PC-3 (cell line): ENCODE measurements at regions of chr2 and their contacts with region 1.

Region 1: GRCh38 chr2:12320991-12321641 is 395.6 kb upstream of the TRIB2 start:
- DNase-seq: peak; percentile 87
- ATAC-seq: peak; percentile 3; the same call in 1 of the 2 replicates
- H3K4me3 ChIP-seq: no peak overlapping the region
- H3K27ac ChIP-seq: peak overlapping the region; percentile 52
- H3K4me1 ChIP-seq: peaks cover 70% of the 10 kb centered on the region
- H3K27me3 ChIP-seq: no peaks in the 10 kb centered on the region
- CTCF ChIP-seq: peak; percentile 31; the same call in 1 of the 2 replicates

Region 2: GRCh38 chr2:12050396-12050795 is 270.7 kb before region 1 on chr2:
- CTCF ChIA-PET with region 1: no interaction called
- POLR2A ChIA-PET with region 1: no interaction called
- intact Hi-C with region 1: loop called (anchors 1 kb)
- DNase-seq: peak; percentile 90
- ATAC-seq: peak; percentile 83
- H3K4me3 ChIP-seq: no peak overlapping the region
- H3K27ac ChIP-seq: peak overlapping the region; percentile 78
- H3K4me1 ChIP-seq: peaks cover 42% of the 10 kb centered on the region
- H3K27me3 ChIP-seq: no peaks in the 10 kb centered on the region
- CTCF ChIP-seq: peak; percentile 76

Region 3: DNA sequence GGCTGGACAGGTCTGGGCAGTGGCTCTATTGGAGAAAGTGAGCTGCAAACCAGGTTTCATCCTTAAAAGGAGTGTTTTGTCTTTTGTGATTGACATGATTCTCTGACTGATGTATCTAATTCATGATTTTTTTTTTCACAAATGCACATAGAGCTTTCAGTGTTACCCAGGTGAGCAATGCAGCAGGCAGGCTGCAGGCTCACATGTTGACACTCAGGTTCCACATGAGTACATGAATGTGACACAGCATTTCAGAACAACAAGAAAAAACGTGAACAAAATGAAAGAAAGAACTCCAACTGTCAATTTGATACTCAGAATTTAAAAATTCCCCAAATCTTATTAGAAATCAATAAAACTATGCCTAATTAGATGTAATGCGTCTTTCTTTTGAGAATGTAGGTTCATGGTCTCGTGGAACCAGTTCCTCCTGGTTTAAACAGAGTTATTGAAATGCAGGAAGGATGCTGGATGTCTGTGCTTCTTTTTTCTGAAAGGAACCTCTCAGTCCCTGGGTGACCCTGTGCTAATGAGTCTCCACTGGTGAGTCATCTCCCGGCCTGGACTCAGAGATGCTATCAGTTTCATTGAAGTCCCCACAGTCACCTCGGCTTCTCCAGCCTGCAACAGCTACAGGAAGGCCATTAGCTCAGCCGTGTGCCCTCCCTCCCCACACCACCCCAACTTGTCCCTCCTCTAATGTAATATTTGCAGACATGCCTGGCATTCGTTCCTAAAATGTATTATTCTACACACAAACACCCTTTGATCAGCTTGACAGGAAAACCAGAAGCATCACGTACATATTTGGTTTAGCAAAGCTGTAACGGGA is 144.3 kb before region 1 on chr2:
- CTCF ChIA-PET with region 1: no interaction called
- POLR2A ChIA-PET with region 1: no interaction called
- intact Hi-C with region 1: loop called (anchors 2 kb)
- DNase-seq: peak; percentile 88
- ATAC-seq: peak; percentile 99
- H3K4me3 ChIP-seq: no peak overlapping the region
- H3K27ac ChIP-seq: peak overlapping the region; percentile 22
- H3K4me1 ChIP-seq: peaks cover 17% of the 10 kb centered on the region
- H3K27me3 ChIP-seq: no peaks in the 10 kb centered on the region
- CTCF ChIP-seq: no peak

Region 4: GRCh38 chr2:12430407-12431133 is 109.5 kb after region 1 on chr2:
- CTCF ChIA-PET with region 1: no interaction called
- POLR2A ChIA-PET with region 1: no interaction called
- intact Hi-C with region 1: loop called (anchors 5 kb)
- DNase-seq: peak; percentile 32
- ATAC-seq: peak; percentile 65
- H3K4me3 ChIP-seq: no peak overlapping the region
- H3K27ac ChIP-seq: 0 out of 2 replicates have a peak overlapping the region, but pooled peaks have one; percentile 1
- H3K4me1 ChIP-seq: peaks cover 20% of the 10 kb centered on the region
- H3K27me3 ChIP-seq: no peaks in the 10 kb centered on the region
- CTCF ChIP-seq: no peak

Region 5: GRCh38 chr2:12702305-12703121 is 381.4 kb after region 1 on chr2:
- CTCF ChIA-PET with region 1: no interaction called
- POLR2A ChIA-PET with region 1: no interaction called
- intact Hi-C with region 1: loop called (anchors 1 kb)
- DNase-seq: peak; percentile 94
- ATAC-seq: peak; percentile 79
- H3K4me3 ChIP-seq: peak overlapping the region; percentile 28; the same call in 1 of the 2 replicates
- H3K27ac ChIP-seq: peak overlapping the region; percentile 99
- H3K4me1 ChIP-seq: peaks cover 57% of the 10 kb centered on the region
- H3K27me3 ChIP-seq: no peaks in the 10 kb centered on the region
- CTCF ChIP-seq: no peak

Region 6: GRCh38 chr2:12931186-12931844 is 610.2 kb after region 1 on chr2:
- CTCF ChIA-PET with region 1: no interaction called
- POLR2A ChIA-PET with region 1: no interaction called
- intact Hi-C with region 1: loop called (anchors 10 kb)
- DNase-seq: peak; percentile 67
- ATAC-seq: peak; percentile 16; the same call in 1 of the 2 replicates
- H3K4me3 ChIP-seq: no peak overlapping the region
- H3K27ac ChIP-seq: peak overlapping the region; percentile 97
- H3K4me1 ChIP-seq: peaks cover 33% of the 10 kb centered on the region
- H3K27me3 ChIP-seq: no peaks in the 10 kb centered on the region
- CTCF ChIP-seq: peak; percentile 94